ENCODE measurements at regions of chr6 and their contacts with region 1.

Region 1: GRCh38 chr6:97394160-97394748 is 111.2 kb upstream of the MMS22L start:
- DNase-seq: peak in 4 of 10 donors; percentile 8 to 38 (median 20)
- H3K4me3 ChIP-seq: no peak overlapping the region
- H3K27ac ChIP-seq: no peak overlapping the region
- H3K27me3 ChIP-seq: no peaks in the 10 kb centered on the region
- CTCF ChIP-seq: peak; percentile 75 to 98 (median 90)

Region 2: GRCh38 chr6:97186416-97186999 is 207.7 kb before region 1 on chr6:
- intact Hi-C with region 1: loop called in 1 of 2 experiments (anchors 10 kb)
- DNase-seq: peak; percentile 37 to 88 (median 64)
- H3K4me3 ChIP-seq: no peak overlapping the region
- H3K27ac ChIP-seq: no peak overlapping the region
- H3K27me3 ChIP-seq: no peaks in the 10 kb centered on the region
- CTCF ChIP-seq: peak; percentile 80 to 99 (median 92)

Region 3: GRCh38 chr6:97215157-97215769 is 179.0 kb before region 1 on chr6:
- intact Hi-C with region 1: loop called (anchors 2 to 10 kb)
- DNase-seq: peak; percentile 10 to 79 (median 50)
- H3K4me3 ChIP-seq: peak overlapping the region in 19 of 59 donors; percentile 1 to 31 (median 18)
- H3K27ac ChIP-seq: peak overlapping the region in 27 of 59 donors; percentile 4 to 79 (median 40)
- H3K27me3 ChIP-seq: no peaks in the 10 kb centered on the region
- CTCF ChIP-seq: peak; percentile 40 to 83 (median 68)